Left colon (tissue), 2 donors: ENCODE measurements at regions of chr2 and their contacts with region 1.

Region 1: DNA sequence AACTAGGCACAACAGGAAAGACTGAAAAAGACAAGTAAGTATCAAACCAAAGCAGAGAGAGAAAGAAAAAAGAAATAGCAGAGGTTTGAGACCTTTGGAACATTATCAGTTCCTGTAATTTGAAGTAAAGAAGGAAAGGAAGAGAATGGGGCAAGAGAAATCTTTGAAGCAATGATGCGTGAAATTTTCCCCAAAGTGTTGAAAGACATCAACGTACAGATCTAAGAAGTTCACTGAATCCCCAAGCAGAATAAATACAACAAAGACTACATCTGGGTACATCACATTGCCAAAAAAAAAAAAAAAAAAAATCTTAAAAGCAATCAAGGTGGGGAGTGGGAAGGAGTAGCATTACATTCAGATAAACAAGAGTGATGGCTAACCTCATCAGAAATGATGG is 6.0 kb upstream of the SLC30A6 start:
- DNase-seq: no peak
- ATAC-seq: no peak

Region 2: DNA sequence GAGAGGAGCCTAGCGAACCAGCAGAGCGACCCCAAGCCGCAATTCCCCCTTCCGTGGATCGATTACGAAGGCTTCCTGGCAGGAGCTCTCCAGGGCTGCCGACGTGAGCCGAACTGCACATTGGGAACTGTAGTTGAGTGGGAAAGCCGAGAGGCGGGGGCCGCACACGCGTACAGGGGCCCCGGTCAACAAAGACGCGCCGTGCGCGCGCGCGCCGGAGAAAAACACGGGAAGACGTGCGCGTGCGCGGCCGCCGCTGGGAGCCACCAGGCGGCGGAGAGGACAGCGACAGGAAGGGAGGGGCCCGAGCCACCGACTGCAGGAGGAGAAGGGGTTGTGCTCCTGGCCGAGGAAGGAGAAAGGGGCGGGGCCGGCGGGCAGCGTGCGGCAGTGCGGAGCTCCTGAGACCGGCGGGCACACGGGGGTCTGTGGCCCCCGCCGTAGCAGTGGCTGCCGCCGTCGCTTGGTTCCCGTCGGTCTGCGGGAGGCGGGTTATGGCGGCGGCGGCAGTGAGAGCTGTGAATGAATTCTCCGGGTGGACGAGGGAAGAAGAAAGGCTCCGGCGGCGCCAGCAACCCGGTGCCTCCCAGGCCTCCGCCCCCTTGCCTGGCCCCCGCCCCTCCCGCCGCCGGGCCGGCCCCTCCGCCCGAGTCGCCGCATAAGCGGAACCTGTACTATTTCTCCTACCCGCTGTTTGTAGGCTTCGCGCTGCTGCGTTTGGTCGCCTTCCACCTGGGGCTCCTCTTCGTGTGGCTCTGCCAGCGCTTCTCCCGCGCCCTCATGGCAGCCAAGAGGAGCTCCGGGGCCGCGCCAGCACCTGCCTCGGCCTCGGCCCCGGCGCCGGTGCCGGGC is 96.1 kb before region 1 on chr2 and contains the start of gene SPAST:
- intact Hi-C with region 1: loop called in 1 of 2 experiments (anchors 10 kb)
- DNase-seq: peak; percentile 97 to 99
- ATAC-seq: peak; percentile 93
- total RNA-seq, gene SPAST: 18.6 TPM